ENCODE measurements at regions of chr10 and their contacts with region 1.

Region 1: GRCh38 chr10:128035557-128035973 is 90.7 kb downstream of the MKI67 start:
- DNase-seq: no peak
- H3K4me3 ChIP-seq: no peak overlapping the region
- H3K27me3 ChIP-seq: no peaks in the 10 kb centered on the region
- CTCF ChIP-seq: peak; percentile 83

Region 2: DNA sequence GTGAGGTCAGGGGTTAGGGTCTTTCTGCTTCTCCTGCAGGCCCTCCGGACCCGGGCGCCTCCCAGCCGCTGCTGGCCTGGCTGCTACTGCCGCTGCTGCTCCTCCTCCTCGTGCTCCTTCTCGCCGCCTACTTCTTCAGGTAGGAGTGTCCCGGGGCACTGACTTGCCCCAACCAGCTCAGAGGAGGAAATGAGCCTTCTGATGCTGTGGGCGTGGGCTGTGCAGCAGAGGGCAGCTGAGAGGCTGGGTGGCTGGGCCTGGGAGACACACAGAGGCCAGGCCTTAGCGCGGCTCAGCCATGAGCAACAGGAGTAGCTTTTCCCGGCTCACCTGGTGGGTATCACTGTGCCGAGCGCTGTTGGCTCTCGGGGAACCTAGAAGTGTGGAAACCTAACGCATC is 11.8 kb after region 1 on chr10:
- CTCF ChIA-PET with region 1: interaction called, 41 read pairs
- POLR2A ChIA-PET with region 1: no interaction called
- DNase-seq: no peak
- H3K4me3 ChIP-seq: no peak overlapping the region
- H3K27me3 ChIP-seq: no peaks in the 10 kb centered on the region
- CTCF ChIP-seq: no peak

Region 3: GRCh38 chr10:128054163-128054970 is 18.8 kb after region 1 on chr10:
- CTCF ChIA-PET with region 1: interaction called, 12 read pairs
- POLR2A ChIA-PET with region 1: no interaction called
- DNase-seq: no peak
- H3K4me3 ChIP-seq: no peak overlapping the region
- H3K27me3 ChIP-seq: no peaks in the 10 kb centered on the region
- CTCF ChIP-seq: no peak

Region 4: DNA sequence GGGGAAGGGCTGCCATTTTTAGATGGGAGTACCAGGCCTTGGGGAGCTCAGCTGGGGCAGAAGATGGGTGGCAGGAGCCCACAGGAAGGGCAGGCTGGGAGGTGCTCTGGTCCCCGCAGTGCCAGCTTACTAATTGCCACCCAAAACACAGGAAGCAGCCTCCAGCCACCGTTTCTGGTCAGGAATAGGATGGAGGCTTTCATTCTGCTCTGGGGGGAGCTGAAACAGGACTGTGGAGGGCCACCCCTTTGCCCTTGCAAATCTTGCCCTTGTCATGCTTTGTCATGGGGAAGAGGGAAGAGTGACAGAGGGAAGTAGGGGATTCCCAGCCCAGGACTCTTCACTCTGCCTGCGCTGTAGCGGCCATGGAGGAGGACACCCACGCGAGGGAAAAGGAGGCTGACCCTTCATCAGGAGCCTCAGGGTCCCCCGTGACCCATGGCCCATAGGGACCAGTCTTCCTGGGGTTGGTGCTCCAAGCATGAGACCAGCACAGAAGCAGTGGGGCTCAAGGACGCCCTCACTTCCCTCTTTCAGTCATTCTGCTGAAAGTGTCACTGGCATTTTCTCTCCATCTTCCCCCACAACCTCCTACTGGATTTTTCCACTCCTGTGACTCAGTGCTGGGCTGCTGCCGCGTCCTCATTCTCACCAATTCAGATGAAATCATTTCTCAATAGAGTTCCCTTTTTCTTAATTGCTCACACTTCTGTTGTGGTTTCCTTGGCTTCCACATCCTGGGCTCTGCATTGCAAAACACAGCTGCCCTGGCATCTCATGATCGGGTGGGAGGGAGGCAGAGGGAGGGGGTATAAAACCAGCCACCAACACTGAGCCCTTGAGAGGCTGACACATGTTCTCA is 28.8 kb after region 1 on chr10:
- CTCF ChIA-PET with region 1: interaction called, 160 read pairs
- POLR2A ChIA-PET with region 1: no interaction called
- DNase-seq: no peak
- H3K4me3 ChIP-seq: no peak overlapping the region
- H3K27me3 ChIP-seq: no peaks in the 10 kb centered on the region
- CTCF ChIP-seq: no peak

Region 5: GRCh38 chr10:128069351-128070051 is 33.9 kb after region 1 on chr10:
- CTCF ChIA-PET with region 1: interaction called, 160 read pairs
- POLR2A ChIA-PET with region 1: no interaction called
- DNase-seq: no peak
- H3K4me3 ChIP-seq: no peak overlapping the region
- H3K27me3 ChIP-seq: no peaks in the 10 kb centered on the region; the same call in 1 of the 2 replicates
- CTCF ChIP-seq: peak; percentile 80

Region 6: GRCh38 chr10:128078136-128078969 is 42.8 kb after region 1 on chr10:
- CTCF ChIA-PET with region 1: interaction called, 160 read pairs
- POLR2A ChIA-PET with region 1: no interaction called
- DNase-seq: no peak
- H3K4me3 ChIP-seq: no peak overlapping the region
- H3K27me3 ChIP-seq: peaks cover 5% of the 10 kb centered on the region
- CTCF ChIP-seq: peak; percentile 93

Region 7: GRCh38 chr10:128167926-128168520 is 132.5 kb after region 1 on chr10:
- CTCF ChIA-PET with region 1: no interaction called
- POLR2A ChIA-PET with region 1: no interaction called
- DNase-seq: no peak
- H3K4me3 ChIP-seq: no peak overlapping the region
- H3K27me3 ChIP-seq: no peaks in the 10 kb centered on the region
- CTCF ChIP-seq: no peak

Region 8: DNA sequence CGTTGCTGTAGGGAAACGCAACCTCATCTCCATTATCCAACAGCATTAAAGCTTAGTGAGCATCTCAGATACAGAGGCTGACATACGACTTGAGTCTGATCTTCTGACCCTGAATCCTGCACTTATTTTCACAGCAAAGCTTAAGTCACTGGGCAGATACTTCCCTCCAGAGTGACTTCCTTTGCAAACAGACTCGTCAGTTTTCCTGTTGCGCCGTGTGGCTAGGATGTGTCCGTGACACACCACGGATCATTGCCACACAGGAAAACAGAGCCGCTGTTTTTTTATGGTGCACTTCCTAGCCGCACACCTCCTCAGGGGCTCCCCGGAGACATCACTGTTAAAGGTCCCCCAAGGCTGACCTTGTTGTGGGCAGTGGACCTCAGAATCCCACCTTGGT is 185.6 kb after region 1 on chr10:
- CTCF ChIA-PET with region 1: no interaction called
- POLR2A ChIA-PET with region 1: no interaction called
- DNase-seq: no peak
- H3K4me3 ChIP-seq: no peak overlapping the region
- H3K27me3 ChIP-seq: no peaks in the 10 kb centered on the region
- CTCF ChIP-seq: no peak

Measured in BJ (cell line).